GM10248 (cell line): ENCODE measurements at regions of chr6 and their contacts with region 1.

Region 1: GRCh38 chr6:11414176-11414963 is 123.2 kb upstream of the TMEM170B start:
- DNase-seq: no peak
- CTCF ChIP-seq: no peak

Region 2: GRCh38 chr6:11428895-11429294 is 14.5 kb after region 1 on chr6:
- CTCF ChIA-PET with region 1: interaction called, 18 read pairs
- POLR2A ChIA-PET with region 1: no interaction called
- DNase-seq: no peak
- CTCF ChIP-seq: no peak